CD4-positive, alpha-beta T cell (primary cell): ENCODE measurements at regions of chr6 and their contacts with region 1.

Region 1: DNA sequence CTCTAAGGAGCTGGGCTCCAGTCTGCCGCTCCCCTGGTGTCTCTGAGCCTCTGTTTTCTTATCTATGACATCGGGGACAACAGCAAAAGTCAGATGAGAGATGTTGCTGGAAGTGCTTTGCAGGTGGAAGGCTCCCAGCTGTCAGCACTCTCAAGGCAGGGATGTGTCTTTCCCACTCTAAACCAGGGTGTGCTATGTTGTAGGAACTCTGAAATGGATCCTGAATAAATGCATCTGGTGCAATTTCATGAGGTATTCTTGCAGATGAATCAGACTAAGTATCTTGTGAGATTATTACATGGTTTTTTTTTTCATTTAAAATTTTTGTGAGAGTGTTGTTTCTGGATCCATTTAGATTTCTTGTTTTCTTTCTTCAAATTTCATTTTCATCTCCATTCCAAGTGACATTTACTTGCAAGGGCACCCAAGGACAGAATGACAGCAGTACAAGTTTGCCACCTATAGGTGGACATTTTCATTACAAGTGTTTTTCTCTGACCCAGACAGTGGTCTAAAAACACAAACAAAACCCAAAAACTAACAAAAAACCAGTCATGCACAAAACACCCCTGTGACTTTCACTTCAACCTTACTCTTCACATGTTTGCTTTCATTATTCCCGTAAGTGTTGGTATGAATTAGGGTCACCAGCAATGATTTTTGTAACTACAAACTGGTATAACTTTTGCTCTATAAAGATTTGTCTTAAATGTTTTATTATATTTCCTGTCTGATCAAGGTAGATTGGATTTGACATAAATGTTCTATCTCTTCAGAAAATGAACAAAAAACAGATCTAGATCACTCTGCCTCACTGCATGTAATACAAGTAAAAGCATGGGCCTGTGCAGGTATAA is 14.7 kb upstream of the SIM1 start:
- DNase-seq: peak in 3 of 14 experiments; percentile 29 to 43 (median 38)
- ATAC-seq: no peak
- H3K4me3 ChIP-seq: no peak overlapping the region
- H3K4me3 Mint-ChIP-seq: no peak overlapping the region
- H3K27ac ChIP-seq: no peak overlapping the region
- H3K27ac Mint-ChIP-seq: no peak overlapping the region
- H3K4me1 ChIP-seq: no peaks in the 10 kb centered on the region
- H3K4me1 Mint-ChIP-seq: no peaks in the 10 kb centered on the region
- H3K27me3 ChIP-seq: peaks cover 0 to 19% of the 10 kb centered on the region in 2 experiments
- H3K27me3 Mint-ChIP-seq: peaks cover 50% of the 10 kb centered on the region
- CTCF ChIP-seq: peak; percentile 41

Region 2: GRCh38 chr6:99330159-99330558 is 1149.2 kb before region 1 on chr6:
- CTCF ChIA-PET with region 1: no interaction called
- POLR2A ChIA-PET with region 1: no interaction called
- intact Hi-C with region 1: loop called in 1 of 2 experiments (anchors 5 kb)
- DNase-seq: peak; percentile 6 to 74 (median 30)
- ATAC-seq: peak; percentile 54
- H3K4me3 ChIP-seq: no peak overlapping the region
- H3K4me3 Mint-ChIP-seq: no peak overlapping the region
- H3K27ac ChIP-seq: no peak overlapping the region
- H3K27ac Mint-ChIP-seq: no peak overlapping the region
- H3K4me1 ChIP-seq: no peaks in the 10 kb centered on the region
- H3K4me1 Mint-ChIP-seq: no peaks in the 10 kb centered on the region
- H3K27me3 ChIP-seq: peaks cover 0 to 5% of the 10 kb centered on the region in 2 experiments
- H3K27me3 Mint-ChIP-seq: peaks cover 14% of the 10 kb centered on the region
- CTCF ChIP-seq: peak; percentile 72

Region 3: DNA sequence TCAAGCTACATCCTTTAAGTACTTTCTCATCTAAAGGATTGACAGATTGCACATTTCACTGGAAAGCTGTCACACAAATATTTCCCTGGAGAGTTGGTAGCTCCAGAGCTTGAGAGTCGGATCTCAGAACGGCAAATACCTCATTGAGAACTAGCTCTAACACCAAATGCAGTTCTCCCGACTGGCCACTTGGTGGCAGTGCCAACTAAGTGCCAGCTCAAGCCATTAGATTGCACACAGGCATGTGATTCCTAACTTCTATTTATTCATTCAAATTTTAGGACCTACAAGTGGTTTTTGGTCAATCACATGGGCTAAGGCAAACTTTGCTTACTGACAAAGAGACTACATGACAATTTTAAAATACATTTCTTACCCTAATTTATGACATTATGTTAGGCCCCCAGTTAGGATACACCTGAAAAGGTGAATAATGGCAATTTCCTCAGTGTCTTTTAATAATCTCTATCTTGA is 477.5 kb before region 1 on chr6:
- CTCF ChIA-PET with region 1: no interaction called
- POLR2A ChIA-PET with region 1: no interaction called
- intact Hi-C with region 1: loop called (anchors 5 kb)
- DNase-seq: peak in 12 of 14 experiments; percentile 2 to 52 (median 20)
- ATAC-seq: peak; percentile 39
- H3K4me3 ChIP-seq: no peak overlapping the region
- H3K4me3 Mint-ChIP-seq: no peak overlapping the region
- H3K27ac ChIP-seq: no peak overlapping the region
- H3K27ac Mint-ChIP-seq: no peak overlapping the region
- H3K4me1 ChIP-seq: no peaks in the 10 kb centered on the region
- H3K4me1 Mint-ChIP-seq: no peaks in the 10 kb centered on the region
- H3K27me3 ChIP-seq: peaks cover 0 to 6% of the 10 kb centered on the region in 2 experiments
- H3K27me3 Mint-ChIP-seq: peaks cover 59% of the 10 kb centered on the region
- CTCF ChIP-seq: peak; percentile 93

Region 4: DNA sequence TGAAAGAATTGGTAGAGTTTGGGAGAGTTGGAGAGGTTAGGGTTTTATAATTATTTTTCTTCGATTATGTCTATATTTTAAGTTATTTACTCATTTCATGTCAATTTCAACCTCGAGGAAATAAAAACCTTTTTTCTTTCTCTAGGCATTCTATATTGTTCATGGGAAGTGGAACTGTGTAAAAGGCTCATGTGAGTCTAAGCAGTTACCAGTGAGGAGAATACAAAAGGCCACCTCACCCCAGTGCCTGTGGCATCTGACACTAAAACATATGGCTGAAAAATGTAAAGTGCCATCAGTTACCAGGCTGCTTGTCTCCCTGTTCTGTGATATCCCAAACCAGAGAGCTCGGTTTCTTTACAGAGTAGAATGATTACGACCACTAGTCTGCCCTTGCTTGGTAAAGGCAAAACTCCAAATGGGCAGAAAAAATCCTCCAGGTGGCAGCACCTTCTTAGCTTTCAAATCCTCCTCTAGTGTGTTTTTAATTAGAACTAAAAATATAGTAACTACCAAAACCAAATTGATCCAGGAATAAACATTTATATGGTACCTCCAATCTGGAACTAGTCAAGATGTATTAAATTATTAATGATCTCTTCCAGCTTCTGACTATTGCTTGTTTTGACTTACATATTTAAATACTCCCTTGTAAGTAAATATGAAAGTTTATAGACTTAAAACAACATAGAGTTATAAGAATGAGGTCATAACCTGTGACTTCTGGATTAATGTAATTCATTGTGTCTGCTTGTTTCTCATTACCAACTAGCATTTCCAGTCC is 362.8 kb before region 1 on chr6:
- CTCF ChIA-PET with region 1: no interaction called
- POLR2A ChIA-PET with region 1: no interaction called
- intact Hi-C with region 1: loop called in 1 of 2 experiments (anchors 10 kb)
- DNase-seq: peak in 4 of 14 experiments; percentile 7 to 29 (median 25)
- ATAC-seq: no peak
- H3K4me3 ChIP-seq: no peak overlapping the region
- H3K4me3 Mint-ChIP-seq: no peak overlapping the region
- H3K27ac ChIP-seq: no peak overlapping the region
- H3K27ac Mint-ChIP-seq: no peak overlapping the region
- H3K4me1 ChIP-seq: no peaks in the 10 kb centered on the region
- H3K4me1 Mint-ChIP-seq: no peaks in the 10 kb centered on the region
- H3K27me3 ChIP-seq: no peaks in the 10 kb centered on the region
- H3K27me3 Mint-ChIP-seq: peaks cover 24% of the 10 kb centered on the region
- CTCF ChIP-seq: peak; percentile 28

Region 5: DNA sequence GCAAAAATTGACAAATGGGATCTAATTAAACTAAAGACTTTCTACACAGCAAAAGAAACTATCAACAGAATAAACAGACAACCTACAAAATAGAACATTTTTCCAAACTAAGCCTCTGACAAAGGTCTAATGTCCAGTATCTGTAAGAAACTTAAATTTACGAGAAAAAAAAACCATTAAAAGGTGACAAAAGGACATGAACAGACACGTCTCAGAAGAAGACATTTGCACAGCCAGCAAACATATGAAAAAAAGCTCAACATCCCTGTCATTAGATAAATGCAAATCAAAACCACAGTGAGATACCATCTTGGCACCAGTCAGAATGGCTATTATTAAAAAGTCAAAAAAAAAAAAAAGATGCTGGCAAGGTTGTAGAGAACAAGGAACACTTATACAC is 843.5 kb after region 1 on chr6:
- CTCF ChIA-PET with region 1: no interaction called
- POLR2A ChIA-PET with region 1: no interaction called
- intact Hi-C with region 1: no loop called
- DNase-seq: no peak
- ATAC-seq: no peak
- H3K4me3 ChIP-seq: no peak overlapping the region
- H3K4me3 Mint-ChIP-seq: no peak overlapping the region
- H3K27ac ChIP-seq: no peak overlapping the region
- H3K27ac Mint-ChIP-seq: no peak overlapping the region
- H3K4me1 ChIP-seq: no peaks in the 10 kb centered on the region
- H3K4me1 Mint-ChIP-seq: no peaks in the 10 kb centered on the region
- H3K27me3 ChIP-seq: no peaks in the 10 kb centered on the region
- H3K27me3 Mint-ChIP-seq: no peaks in the 10 kb centered on the region
- CTCF ChIP-seq: no peak